Heart left ventricle (tissue), 16 donors: ENCODE measurements at regions of chr14 and their contacts with region 1.

Region 1: DNA sequence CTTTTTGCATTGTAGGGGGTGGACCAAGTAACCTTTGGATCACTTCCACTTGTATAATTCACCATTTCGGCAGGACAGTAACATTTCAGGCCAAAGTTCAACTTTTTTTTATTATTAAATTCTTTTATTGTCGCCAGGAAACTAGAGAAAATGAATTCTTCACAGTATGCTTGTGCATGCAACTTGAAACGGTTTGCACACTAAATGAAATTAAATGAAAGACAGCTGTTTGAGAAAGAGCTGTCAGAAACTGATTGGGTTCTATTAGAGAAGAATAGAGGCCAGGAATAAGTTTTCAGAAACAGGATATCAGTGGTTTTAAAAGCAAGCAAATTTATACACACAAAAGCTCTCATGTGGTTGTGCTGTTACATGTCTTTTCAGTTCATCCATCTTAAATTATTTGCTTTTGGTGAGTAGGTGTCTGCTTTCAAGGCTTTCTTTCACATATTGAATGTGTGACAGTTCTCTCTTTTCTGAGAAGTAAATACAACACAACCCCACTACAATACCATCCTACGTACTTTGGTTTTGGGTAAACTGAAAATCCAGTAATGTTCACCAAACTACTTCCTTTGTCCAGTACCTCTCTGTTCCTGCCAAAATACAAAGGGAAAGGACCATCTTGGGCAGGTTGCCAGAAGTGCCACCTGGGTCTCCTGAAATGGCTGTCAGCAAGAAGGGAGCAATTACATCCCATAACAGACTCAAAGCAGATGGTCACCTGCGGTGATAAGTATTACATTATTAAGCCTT is 291.7 kb downstream of the RAD51B start:
- DNase-seq: no peak
- ATAC-seq: no peak
- H3K4me3 ChIP-seq: no peak overlapping the region
- H3K27ac ChIP-seq: peak overlapping the region in 1 of 12 donors; percentile 26
- H3K4me1 ChIP-seq: peaks cover 0 to 20% (median 5%) of the 10 kb centered on the region in 12 donors
- H3K27me3 ChIP-seq: peaks cover 0 to 2% (median 0%) of the 10 kb centered on the region in 9 donors
- CTCF ChIP-seq: no peak
- POLR2A ChIP-seq: no peak

Region 2: DNA sequence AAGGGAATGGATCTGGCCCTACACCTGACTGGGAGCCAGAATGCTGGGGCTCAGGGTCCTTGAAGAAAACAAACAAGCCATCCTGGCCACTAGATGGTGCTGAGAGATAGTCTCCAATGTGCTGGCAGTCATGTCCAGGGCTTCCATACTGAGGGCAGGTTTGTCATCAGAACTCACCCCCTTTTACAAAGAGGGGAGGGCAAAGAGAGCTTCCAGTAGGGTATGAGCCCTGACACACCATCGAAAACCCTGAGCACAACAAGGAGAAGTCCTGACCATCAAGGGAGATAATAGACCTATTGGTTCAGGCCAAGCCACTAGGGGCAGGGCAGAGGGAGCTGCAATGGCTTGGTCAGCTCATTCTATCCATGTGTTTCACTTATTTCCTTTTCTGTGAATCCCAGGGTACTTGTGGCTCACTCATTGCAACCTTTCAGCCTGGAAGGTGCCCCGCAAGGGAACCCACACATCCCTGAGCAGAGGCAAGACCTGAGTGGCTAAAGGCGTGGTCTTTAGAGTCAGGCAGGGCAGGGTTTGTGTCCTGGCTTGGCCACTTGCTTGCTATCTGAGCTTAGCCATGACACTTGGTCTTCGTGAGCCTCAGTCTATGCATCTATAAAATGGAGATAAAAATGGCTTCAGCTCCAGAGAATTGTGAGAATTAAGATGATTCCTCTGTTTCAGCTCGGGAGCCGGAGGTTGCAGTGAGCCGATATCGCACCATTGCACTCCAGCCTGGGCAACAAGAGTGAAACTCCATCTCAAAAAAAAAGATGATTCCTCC is 584.4 kb before region 1 on chr14:
- intact Hi-C with region 1: no loop called
- DNase-seq: peak in 3 of 5 donors; percentile 13 to 37 (median 24)
- ATAC-seq: peak in 3 of 4 donors; percentile 64 to 76 (median 72)
- H3K4me3 ChIP-seq: no peak overlapping the region
- H3K27ac ChIP-seq: no peak overlapping the region
- H3K4me1 ChIP-seq: no peaks in the 10 kb centered on the region
- H3K27me3 ChIP-seq: peaks cover 0 to 38% (median 0%) of the 10 kb centered on the region in 9 donors
- CTCF ChIP-seq: peak; percentile 31 to 75 (median 57)
- POLR2A ChIP-seq: no peak

Region 3: GRCh38 chr14:68076451-68076850 is 34.8 kb before region 1 on chr14:
- intact Hi-C with region 1: loop called in 1 of 10 experiments (anchors 5 kb)
- DNase-seq: no peak
- ATAC-seq: no peak
- H3K4me3 ChIP-seq: no peak overlapping the region
- H3K27ac ChIP-seq: no peak overlapping the region
- H3K4me1 ChIP-seq: no peaks in the 10 kb centered on the region
- H3K27me3 ChIP-seq: no peaks in the 10 kb centered on the region
- CTCF ChIP-seq: no peak
- POLR2A ChIP-seq: no peak

Region 4: GRCh38 chr14:68210729-68211299 is 99.5 kb after region 1 on chr14:
- intact Hi-C with region 1: no loop called
- DNase-seq: peak in 3 of 5 donors; percentile 16 to 33 (median 31)
- ATAC-seq: peak; percentile 32 to 92 (median 84)
- H3K4me3 ChIP-seq: peak overlapping the region in 7 of 12 donors; percentile 6 to 43 (median 18)
- H3K27ac ChIP-seq: peak overlapping the region in 11 of 12 donors; percentile 36 to 86 (median 63)
- H3K4me1 ChIP-seq: peaks cover 0 to 47% (median 13%) of the 10 kb centered on the region in 12 donors
- H3K27me3 ChIP-seq: no peaks in the 10 kb centered on the region
- CTCF ChIP-seq: no peak
- POLR2A ChIP-seq: no peak